ENCODE measurements at regions of chr16 and their contacts with region 1.

Region 1: GRCh38 chr16:28950648-28951409 is at the start of gene NFATC2IP:
- DNase-seq: peak; percentile 100
- ATAC-seq: peak; percentile 96
- H3K4me3 ChIP-seq: peak within 1 kb of the TSS; percentile 61 to 82
- H3K27ac ChIP-seq: peak within 1 kb of the TSS; percentile 87
- H3K4me1 ChIP-seq: peaks cover 4% of the 10 kb centered on the region; the same call in 1 of the 2 replicates
- H3K27me3 ChIP-seq: no peaks in the 10 kb centered on the region
- CTCF ChIP-seq: no peak
- total RNA-seq, gene NFATC2IP: 47.3 TPM

Region 2: GRCh38 chr16:28823872-28824716 is 126.7 kb before region 1 on chr16:
- CTCF ChIA-PET with region 1: no interaction called
- POLR2A ChIA-PET with region 1: interaction called, 11 read pairs
- in situ Hi-C with region 1: no loop called
- intact Hi-C with region 1: no loop called
- DNase-seq: peak; percentile 76
- ATAC-seq: peak; percentile 86
- H3K4me3 ChIP-seq: peak overlapping the region; percentile 73 to 77
- H3K27ac ChIP-seq: peak overlapping the region; percentile 93
- H3K4me1 ChIP-seq: peaks cover 26% of the 10 kb centered on the region
- H3K27me3 ChIP-seq: no peaks in the 10 kb centered on the region
- CTCF ChIP-seq: no peak